Body of pancreas (tissue), 4 donors: ENCODE measurements at regions of chr7 and their contacts with region 1.

Region 1: GRCh38 chr7:31134246-31135188 is 82.4 kb downstream of the ADCYAP1R1 start:
- DNase-seq: peak; percentile 70 to 79 (median 76)
- ATAC-seq: peak; percentile 84
- H3K4me3 ChIP-seq: no peak overlapping the region
- H3K27ac ChIP-seq: no peak overlapping the region
- H3K4me1 ChIP-seq: no peaks in the 10 kb centered on the region
- H3K27me3 ChIP-seq: no peaks in the 10 kb centered on the region
- CTCF ChIP-seq: peak; percentile 44 to 79 (median 70)
- POLR2A ChIP-seq: no peak

Region 2: DNA sequence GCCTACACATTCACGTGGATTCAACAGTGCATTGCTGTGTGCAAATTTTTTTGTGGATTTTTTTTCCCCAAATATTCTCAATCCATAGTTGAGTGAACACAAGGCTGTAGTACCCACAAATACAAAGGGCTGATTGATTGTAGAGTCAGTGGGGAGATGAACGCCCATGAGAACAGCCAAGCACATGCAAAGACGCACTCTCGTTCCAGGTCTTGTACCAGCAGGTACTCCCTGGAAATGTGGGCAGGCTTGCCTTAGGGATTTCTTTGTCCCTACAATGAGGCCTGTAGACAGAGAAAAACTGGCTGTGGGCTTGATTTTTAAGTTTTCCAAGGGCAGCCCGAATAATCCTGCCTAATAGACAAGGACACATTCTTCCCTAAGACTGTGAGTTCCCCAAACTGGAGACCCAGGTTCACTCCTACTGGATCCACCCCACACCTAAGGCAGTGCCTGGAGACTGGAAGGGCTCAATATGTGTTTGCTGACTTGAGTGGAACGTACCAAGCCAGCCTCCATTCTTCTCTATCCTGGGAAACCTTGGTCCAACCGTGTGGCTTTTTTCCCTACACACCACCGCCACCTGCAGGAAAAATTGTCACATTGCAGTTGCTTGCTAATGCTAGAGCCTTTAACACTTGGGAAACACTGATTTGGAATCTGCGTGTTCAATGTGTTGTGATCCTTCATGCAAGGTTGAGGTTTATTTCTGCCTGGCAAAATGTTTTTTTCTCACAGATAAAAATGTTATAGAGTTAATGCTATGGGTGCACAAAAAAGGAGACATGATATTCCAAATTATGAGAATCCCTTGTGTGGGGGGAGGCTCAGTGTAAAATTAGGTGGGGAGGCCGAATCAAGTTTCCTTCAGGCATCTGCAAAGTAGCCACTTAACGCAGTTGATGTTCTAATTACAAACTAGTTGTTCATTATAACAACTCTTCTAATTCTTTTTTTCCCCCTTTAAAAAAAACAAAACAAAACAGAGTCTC is 601.8 kb after region 1 on chr7:
- intact Hi-C with region 1: loop called (anchors 10 kb)
- DNase-seq: peak; percentile 64 to 67 (median 66)
- ATAC-seq: peak; percentile 78
- H3K4me3 ChIP-seq: no peak overlapping the region
- H3K27ac ChIP-seq: no peak overlapping the region
- H3K4me1 ChIP-seq: no peaks in the 10 kb centered on the region
- H3K27me3 ChIP-seq: no peaks in the 10 kb centered on the region
- CTCF ChIP-seq: peak; percentile 67 to 93 (median 91)
- POLR2A ChIP-seq: no peak